HEK293T (cell line): ENCODE measurements at regions of chr7 and their contacts with region 1.

Region 1: DNA sequence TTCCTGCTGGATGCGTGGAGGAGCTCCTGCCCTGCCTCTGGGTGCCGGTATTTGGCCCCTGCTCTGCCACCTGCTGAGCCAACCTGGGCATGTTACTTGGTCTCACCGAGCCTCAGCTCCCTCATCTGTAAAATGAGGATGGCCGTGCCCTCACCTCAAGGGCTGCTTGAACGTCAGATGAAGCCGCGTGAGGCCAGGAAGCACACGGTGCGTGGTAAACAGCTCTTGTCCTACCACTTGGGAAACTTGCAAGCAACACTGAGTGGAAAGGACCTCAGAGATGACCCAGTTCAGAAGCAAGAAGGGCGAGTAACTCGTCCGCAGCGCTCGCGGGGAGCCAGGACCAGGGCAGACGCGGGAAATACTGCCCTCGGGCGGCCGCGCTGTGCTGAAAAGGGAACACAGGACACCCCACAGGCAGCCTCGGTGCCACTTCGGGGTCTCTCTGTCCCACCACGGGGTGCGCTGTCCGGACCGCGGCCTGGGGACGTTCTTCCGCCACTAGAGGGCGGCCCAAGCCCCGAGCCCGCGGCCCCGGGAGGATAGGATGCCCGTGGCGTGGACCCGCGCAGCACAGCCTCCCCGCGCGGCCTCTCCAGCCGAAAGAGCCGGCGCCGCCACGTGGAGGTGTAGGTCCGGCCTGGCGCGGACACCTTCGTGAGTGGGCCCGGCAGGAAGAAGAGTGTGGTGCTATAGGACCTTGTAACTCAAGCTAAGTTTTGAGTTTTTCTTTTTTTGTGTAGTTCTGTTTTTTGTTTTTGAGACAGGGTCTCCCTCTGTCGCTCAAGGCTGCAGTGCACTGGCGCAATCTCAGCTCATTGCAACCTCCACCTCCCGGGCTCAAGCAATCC is 94.1 kb downstream of the PRKAG2 start:
- DNase-seq: peak; percentile 94

Region 2: DNA sequence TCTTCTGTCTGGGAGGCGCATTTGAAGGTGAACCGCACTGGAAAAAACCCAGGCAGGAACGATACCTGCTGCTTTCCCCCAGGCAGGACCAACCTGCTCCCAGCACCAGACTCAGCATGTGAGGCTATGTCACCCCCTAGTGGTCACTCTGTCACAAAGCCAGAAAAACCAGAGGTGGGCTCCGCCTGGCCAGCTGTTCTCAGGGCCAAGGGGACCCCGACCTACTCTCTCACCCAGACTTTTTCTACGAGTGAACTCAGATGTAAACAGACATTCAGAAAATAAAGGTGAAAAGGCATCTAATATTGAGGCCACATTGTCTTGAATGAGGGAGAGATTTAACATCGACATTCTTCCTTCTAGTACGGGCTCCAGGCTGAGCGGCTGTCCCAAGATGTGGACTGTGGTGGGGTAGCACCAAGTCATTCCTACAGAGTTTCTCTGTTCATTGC is 23.2 kb before region 1 on chr7:
- CTCF ChIA-PET with region 1: interaction called, 10 read pairs
- POLR2A ChIA-PET with region 1: no interaction called
- DNase-seq: peak; percentile 91

Region 3: DNA sequence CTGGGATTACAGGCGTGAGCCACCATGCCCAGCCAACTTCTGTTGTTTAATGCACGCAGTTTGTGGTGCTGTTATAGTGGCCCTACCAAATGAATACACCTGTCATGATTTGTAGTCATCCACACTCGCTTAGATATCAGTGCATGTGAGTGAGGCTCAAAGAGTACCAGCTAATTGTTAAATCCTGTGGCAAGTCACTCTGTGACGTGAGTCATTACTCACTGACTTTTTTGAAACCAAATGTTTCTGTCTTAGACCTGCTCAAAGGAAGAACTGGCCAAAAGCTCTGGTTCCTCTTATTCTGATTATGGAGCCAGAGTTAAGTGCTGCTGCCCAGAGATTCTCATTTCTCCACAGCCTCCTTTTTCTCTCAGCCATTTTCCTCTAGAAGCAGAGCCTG is 15.3 kb before region 1 on chr7:
- CTCF ChIA-PET with region 1: interaction called, 11 read pairs
- POLR2A ChIA-PET with region 1: no interaction called
- DNase-seq: no peak

Region 4: DNA sequence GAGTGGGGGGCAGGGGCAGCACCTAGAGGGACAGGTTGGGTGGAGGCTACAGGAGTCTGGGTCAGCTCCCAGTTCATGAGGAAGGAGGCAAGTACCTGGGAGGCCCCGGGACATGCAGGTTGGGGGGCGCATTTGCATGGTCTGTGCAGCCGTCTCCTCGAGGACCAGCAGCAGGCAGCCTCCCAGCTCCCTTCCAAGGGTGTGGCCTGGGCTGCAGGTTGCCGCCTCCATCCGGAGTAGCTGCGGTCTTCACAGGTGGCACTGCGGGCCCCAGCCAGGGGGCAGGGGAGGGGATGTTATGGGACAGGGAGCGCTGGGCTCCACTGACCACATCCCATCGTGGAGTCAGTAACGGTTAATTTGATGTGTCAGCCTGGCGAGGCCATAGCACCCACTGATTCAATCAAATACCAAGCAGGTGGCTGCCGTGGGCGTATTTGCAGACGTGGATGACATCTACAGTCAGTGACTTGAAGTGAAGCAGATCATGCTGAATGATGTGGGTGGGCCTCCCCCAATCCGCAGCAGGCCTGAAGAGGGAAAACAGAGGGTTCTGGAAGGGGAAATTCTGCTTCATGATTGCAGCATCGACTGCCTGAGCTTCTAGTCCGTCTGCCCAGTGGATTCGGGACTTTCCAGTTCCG is 12.5 kb after region 1 on chr7:
- CTCF ChIA-PET with region 1: interaction called, 20 read pairs
- POLR2A ChIA-PET with region 1: no interaction called
- DNase-seq: no peak

Region 5: DNA sequence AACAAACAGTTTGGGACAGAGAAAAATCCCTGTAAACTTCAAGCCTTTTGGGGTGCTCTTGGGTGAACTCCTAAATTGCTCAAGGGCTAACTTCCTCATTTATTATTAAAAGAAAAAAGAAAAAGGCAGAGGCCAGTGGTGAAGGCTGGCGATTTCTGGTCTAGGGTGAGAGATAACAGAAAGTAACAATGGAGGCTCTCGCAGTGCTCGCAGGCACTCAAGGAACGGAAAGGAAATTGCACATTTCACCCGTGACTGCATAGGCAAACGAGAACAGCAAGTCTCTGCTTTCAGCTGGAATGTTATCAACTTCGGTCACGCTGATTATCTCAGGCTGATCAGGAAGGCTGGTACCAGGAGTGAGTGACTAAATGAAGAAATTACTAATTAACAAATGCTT is 23.4 kb after region 1 on chr7:
- CTCF ChIA-PET with region 1: interaction called, 15 read pairs
- POLR2A ChIA-PET with region 1: no interaction called
- DNase-seq: no peak

Region 6: GRCh38 chr7:151883857-151884256 is 101.0 kb after region 1 on chr7:
- CTCF ChIA-PET with region 1: interaction called, 13 read pairs
- POLR2A ChIA-PET with region 1: no interaction called
- DNase-seq: no peak